Activated B cell treated with CpG ODN at 0.5 μM for 24 hours (primary cell): ENCODE measurements at regions of chr17 and their contacts with region 1.

Region 1: DNA sequence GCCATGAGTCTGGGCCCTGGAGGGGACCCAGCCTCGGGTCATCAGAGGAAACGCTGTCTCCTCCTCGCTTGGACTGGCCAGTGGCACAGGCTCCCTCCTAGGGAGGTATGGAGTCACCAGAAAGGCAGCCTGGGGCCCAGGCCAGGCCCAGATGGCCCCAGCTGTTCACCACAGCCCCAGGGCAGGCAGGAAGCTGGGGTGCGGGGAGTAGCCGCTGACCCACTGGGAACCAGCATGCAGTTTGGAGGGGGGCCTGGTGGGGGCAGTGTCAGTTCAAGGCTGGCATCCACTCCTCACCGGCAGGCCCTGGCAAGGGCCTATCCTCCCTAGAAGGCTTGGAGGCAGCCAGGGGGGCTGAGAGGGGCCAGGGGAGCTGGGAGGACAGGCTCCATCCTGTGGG is 48.8 kb downstream of the SDK2 start:
- DNase-seq: peak; percentile 35
- ATAC-seq: no peak
- H3K4me3 Mint-ChIP-seq: no peak overlapping the region
- H3K27ac Mint-ChIP-seq: peak overlapping the region; percentile 90
- H3K4me1 Mint-ChIP-seq: peaks cover 84% of the 10 kb centered on the region
- H3K27me3 Mint-ChIP-seq: no peaks in the 10 kb centered on the region
- CTCF ChIP-seq: no peak

Region 2: GRCh38 chr17:73566905-73567782 is 28.3 kb before region 1 on chr17:
- CTCF ChIA-PET with region 1: interaction called, 6 read pairs
- POLR2A ChIA-PET with region 1: interaction called, 19 read pairs
- intact Hi-C with region 1: loop called (anchors 1 kb)
- DNase-seq: peak; percentile 51
- ATAC-seq: peak; percentile 89
- H3K4me3 Mint-ChIP-seq: peak overlapping the region; percentile 46
- H3K27ac Mint-ChIP-seq: peak overlapping the region; percentile 92
- H3K4me1 Mint-ChIP-seq: peaks cover 30% of the 10 kb centered on the region
- H3K27me3 Mint-ChIP-seq: no peaks in the 10 kb centered on the region
- CTCF ChIP-seq: no peak

Region 3: GRCh38 chr17:73710095-73710592 is 114.7 kb after region 1 on chr17:
- CTCF ChIA-PET with region 1: no interaction called
- POLR2A ChIA-PET with region 1: no interaction called
- intact Hi-C with region 1: loop called (anchors 2 kb)
- DNase-seq: no peak
- ATAC-seq: peak; percentile 47
- H3K4me3 Mint-ChIP-seq: peak overlapping the region; percentile 1
- H3K27ac Mint-ChIP-seq: no peak overlapping the region
- H3K4me1 Mint-ChIP-seq: peaks cover 27% of the 10 kb centered on the region
- H3K27me3 Mint-ChIP-seq: peaks cover 10% of the 10 kb centered on the region
- CTCF ChIP-seq: peak; percentile 27

Region 4: GRCh38 chr17:73956669-73957465 is 361.4 kb after region 1 on chr17:
- CTCF ChIA-PET with region 1: no interaction called
- POLR2A ChIA-PET with region 1: no interaction called
- intact Hi-C with region 1: loop called (anchors 10 kb)
- DNase-seq: peak; percentile 26
- ATAC-seq: no peak
- H3K4me3 Mint-ChIP-seq: no peak overlapping the region
- H3K27ac Mint-ChIP-seq: no peak overlapping the region
- H3K4me1 Mint-ChIP-seq: peaks cover 3% of the 10 kb centered on the region
- H3K27me3 Mint-ChIP-seq: peaks cover 6% of the 10 kb centered on the region
- CTCF ChIP-seq: no peak

Region 5: GRCh38 chr17:73998653-73999645 is 403.5 kb after region 1 on chr17:
- CTCF ChIA-PET with region 1: no interaction called
- POLR2A ChIA-PET with region 1: no interaction called
- intact Hi-C with region 1: loop called (anchors 2 kb)
- DNase-seq: peak; percentile 30
- ATAC-seq: peak; percentile 34
- H3K4me3 Mint-ChIP-seq: no peak overlapping the region
- H3K27ac Mint-ChIP-seq: no peak overlapping the region
- H3K4me1 Mint-ChIP-seq: no peaks in the 10 kb centered on the region
- H3K27me3 Mint-ChIP-seq: peaks cover 14% of the 10 kb centered on the region
- CTCF ChIP-seq: no peak